ENCODE measurements at regions of chr10 and their contacts with region 1.

Region 1: DNA sequence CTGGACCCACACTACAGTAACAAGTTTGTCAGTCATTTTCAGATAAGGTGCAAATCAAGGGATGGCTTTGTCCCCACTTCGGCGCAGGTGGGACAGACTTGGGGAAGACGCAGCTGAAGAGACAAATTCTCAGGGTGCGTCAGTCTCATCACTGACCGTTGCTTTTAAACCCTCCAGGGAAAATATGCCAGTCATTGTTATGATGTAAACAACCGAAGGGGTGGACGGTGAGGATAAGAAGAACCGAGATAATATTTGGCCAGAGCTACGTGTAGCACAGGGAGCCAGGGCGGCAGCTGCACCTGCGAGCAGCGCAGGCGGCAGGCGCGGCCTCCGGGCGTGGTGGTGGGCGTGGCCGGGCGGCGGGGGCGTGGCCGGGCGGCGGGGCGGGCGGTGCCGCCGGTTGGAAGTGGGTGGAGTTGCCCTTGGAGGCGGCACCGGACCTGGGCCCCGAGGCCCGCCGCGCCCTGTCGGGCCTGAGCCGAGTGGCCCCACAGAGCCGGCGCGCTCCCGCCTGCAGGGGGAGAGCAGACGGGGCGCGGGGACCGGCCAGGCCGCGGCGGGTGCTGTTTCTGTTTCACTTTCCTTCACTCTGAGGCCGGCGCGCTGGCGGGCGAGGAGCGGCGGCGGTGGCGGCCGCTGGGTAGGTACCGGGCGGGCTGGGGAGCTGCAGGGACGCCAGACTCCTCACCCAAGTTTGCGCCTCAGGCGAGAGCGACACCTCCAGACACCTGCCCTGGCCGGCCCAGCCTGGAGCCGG is at the start of gene PCGF5:
- DNase-seq: peak; percentile 90
- ATAC-seq: peak; percentile 99
- H3K4me3 Mint-ChIP-seq: peak within 1 kb of the TSS; percentile 81
- H3K27ac Mint-ChIP-seq: peak within 1 kb of the TSS; percentile 69
- H3K4me1 Mint-ChIP-seq: peaks cover 36% of the 10 kb centered on the region
- H3K27me3 Mint-ChIP-seq: no peaks in the 10 kb centered on the region
- CTCF ChIP-seq: peak; percentile 17
- total RNA-seq, gene PCGF5: 34.8 to 36.9 TPM

Region 2: DNA sequence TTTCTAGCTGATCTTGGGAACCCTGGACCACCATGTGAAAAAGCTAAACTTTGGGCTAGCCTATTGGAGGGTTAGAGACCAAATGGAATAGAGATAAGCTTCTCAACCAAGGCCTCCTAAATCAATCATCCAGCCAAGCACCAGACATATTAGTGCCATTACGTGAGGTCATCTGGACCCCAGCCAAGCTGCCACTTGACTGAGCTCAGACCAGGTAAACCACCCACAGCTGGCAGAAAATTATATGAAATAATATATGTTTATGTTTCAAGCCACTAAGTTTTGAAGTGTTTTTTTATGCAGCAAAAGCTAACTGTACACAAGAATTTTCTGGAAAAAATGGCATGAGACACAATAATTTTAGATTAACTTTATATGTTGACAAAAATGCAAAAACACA is 82.6 kb before region 1 on chr10:
- CTCF ChIA-PET with region 1: no interaction called
- POLR2A ChIA-PET with region 1: no interaction called
- intact Hi-C with region 1: no loop called
- DNase-seq: no peak
- ATAC-seq: no peak
- H3K4me3 Mint-ChIP-seq: no peak overlapping the region
- H3K27ac Mint-ChIP-seq: no peak overlapping the region
- H3K4me1 Mint-ChIP-seq: peaks cover 6% of the 10 kb centered on the region
- H3K27me3 Mint-ChIP-seq: no peaks in the 10 kb centered on the region
- CTCF ChIP-seq: no peak

Region 3: DNA sequence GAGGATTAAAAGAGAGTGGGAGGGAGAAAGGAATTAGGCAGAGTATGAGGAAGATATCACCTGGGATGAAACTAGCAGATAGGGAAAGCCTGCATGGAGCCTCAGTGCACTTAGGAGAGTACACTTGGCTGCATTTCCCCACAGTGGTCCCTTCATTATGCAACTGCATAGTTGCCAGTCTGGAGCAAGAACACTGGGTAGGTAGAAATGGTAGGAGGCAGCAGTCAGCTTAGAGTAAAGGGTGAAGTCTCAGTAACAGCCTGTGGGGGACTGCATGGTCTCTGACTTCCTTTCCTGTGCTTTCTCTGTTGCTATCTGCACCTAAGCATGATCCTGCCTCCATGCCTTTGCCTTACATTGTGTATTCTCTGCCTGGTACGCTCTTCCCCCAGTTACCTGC is 13.9 kb before region 1 on chr10:
- CTCF ChIA-PET with region 1: interaction called, 10 read pairs
- POLR2A ChIA-PET with region 1: interaction called, 7 read pairs
- intact Hi-C with region 1: no loop called
- DNase-seq: no peak
- ATAC-seq: peak; percentile 65
- H3K4me3 Mint-ChIP-seq: no peak overlapping the region
- H3K27ac Mint-ChIP-seq: peak overlapping the region; percentile 4
- H3K4me1 Mint-ChIP-seq: peaks cover 73% of the 10 kb centered on the region
- H3K27me3 Mint-ChIP-seq: no peaks in the 10 kb centered on the region
- CTCF ChIP-seq: peak; percentile 15